Vagina (tissue), 2 donors: ENCODE measurements at regions of chr10 and their contacts with region 1.

Region 1: GRCh38 chr10:35642027-35642792 is at the start of gene FZD8:
- DNase-seq: peak in 1 of 2 donors; percentile 91
- H3K4me3 ChIP-seq: peak within 1 kb of the TSS; percentile 65 to 70
- H3K27ac ChIP-seq: peak within 1 kb of the TSS; percentile 73
- H3K4me1 ChIP-seq: peaks cover 35% of the 10 kb centered on the region
- H3K27me3 ChIP-seq: no peaks in the 10 kb centered on the region
- CTCF ChIP-seq: no peak
- POLR2A ChIP-seq: peak in 1 of 2 donors; percentile 87
- total RNA-seq, gene FZD8: 7.6 TPM

Region 2: DNA sequence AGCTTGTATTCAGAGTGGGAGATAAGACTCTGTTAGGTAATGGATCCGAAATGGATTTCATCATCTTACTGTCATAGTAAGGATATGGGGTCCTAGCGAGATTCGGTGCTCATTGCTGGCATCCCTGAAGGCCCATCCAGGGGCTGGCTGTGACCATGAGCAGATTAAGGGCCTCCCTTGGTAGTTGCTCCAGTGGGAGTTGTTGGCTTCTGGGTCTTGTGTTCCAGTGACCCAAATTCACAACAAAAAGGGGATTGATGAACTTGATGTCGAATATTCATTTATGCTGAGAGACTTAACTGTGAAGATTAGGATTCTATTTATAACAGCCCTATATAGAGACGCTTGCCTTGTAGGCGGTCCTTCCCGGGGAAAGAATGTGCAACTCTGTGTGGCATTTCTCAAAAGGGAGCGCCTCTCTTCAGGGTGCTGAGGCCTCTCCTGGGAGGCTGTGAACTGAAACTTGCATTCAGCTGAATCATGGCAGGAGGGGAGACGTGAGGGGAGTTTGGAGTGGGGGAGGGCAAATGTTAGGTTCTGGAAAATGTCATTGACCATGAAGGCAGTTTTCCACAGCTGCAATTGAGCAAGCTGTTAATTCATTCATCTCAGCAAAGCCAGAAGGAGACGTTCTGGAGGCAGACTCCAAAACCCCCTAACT is 232.9 kb after region 1 on chr10:
- intact Hi-C with region 1: no loop called
- DNase-seq: no peak
- H3K4me3 ChIP-seq: no peak overlapping the region
- H3K27ac ChIP-seq: no peak overlapping the region
- H3K4me1 ChIP-seq: no peaks in the 10 kb centered on the region
- H3K27me3 ChIP-seq: no peaks in the 10 kb centered on the region
- CTCF ChIP-seq: no peak
- POLR2A ChIP-seq: no peak

Region 3: DNA sequence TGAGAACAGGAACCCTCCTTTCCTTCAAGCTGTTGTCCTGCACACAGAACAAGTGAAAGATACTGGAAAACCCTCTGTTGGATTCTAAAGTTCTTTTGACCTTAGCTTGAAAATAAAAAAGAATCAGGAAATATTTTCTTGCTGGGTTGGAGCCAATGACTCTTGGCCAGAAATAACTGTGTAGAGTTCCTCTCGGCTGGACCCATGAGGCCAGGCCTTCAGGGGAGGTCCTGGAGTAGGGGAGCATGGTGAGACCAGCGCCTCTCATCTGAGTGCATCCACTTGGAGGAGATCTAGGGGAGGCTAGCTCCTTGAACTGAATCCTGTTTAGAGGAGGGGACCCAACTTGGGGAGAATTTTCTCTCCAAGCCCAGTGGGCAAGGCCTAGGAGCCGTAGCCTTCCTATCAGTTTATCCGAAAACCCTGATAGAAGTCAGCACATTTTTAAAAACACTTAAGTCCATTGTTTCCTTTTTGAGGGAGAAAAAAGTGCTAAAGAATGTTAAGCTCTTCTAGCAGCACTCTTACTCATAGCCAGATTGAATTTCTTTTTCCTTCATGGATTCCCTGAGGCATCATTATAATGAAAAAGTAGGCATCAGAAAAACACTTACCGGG is 847.5 kb after region 1 on chr10:
- intact Hi-C with region 1: loop called (anchors 10 kb)
- DNase-seq: no peak
- H3K4me3 ChIP-seq: no peak overlapping the region
- H3K27ac ChIP-seq: no peak overlapping the region
- H3K4me1 ChIP-seq: peaks cover 18% of the 10 kb centered on the region
- H3K27me3 ChIP-seq: no peaks in the 10 kb centered on the region
- CTCF ChIP-seq: no peak
- POLR2A ChIP-seq: no peak